Panc1 (cell line): ENCODE measurements at regions of chr2 and their contacts with region 1.

Region 1: GRCh38 chr2:234363011-234363487 is 133.8 kb downstream of the ARL4C start:
- DNase-seq: peak; percentile 28
- ATAC-seq: peak; percentile 96
- H3K4me3 ChIP-seq: peak overlapping the region in 1 of 2 experiments; percentile 3; a peak in 1 of 4 replicates
- H3K27ac ChIP-seq: peak overlapping the region; percentile 100
- H3K4me1 ChIP-seq: peaks cover 57% of the 10 kb centered on the region
- H3K27me3 ChIP-seq: no peaks in the 10 kb centered on the region
- CTCF ChIP-seq: no peak

Region 2: DNA sequence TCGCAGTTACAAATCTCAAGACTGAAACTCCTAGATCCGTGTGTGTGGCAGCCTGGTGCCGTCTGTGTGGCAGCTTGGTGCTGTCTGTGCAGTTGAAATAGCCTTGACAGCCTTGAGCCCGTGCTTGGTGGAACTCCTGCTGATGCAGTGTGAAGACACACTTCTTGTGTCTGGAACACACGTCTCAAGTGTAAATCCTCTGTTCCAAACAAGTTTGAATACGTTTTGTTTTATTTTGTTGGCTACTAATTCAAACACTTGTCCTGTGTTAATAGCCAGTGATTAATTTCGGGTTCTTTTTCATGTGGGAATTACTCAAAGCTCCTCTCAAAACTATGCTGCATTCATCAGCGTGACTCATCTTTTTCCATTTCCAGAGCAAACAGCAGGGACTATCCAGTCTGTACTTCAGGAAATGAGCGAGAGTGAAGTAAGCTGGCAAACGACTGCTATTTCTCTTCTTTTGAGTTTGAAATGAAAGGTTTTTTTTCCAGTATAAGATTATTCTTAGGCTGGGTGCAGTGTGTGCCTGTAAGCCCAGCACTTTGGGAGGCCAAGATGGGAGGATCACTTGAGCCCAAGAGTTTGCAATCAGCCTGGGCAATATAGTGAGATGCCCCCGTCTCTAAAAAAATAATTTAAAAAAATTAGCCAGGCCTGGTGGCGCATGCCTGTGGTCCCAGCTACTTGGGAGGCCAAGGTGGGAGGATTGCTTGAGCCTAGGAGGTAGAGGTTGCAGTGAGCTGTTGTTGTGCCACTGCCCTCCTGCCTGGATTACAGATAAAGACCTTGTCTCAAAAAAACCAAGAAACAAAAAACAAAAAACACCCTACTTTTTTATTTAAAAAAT is 159.7 kb before region 1 on chr2:
- CTCF ChIA-PET with region 1: no interaction called
- POLR2A ChIA-PET with region 1: no interaction called
- in situ Hi-C with region 1: no loop called
- intact Hi-C with region 1: no loop called
- DNase-seq: peak; percentile 94
- ATAC-seq: peak; percentile 98
- H3K4me3 ChIP-seq: peak overlapping the region in 1 of 2 experiments; percentile 23; a peak in 2 of 4 replicates
- H3K27ac ChIP-seq: peak overlapping the region; percentile 90
- H3K4me1 ChIP-seq: peaks cover 18% of the 10 kb centered on the region
- H3K27me3 ChIP-seq: no peaks in the 10 kb centered on the region
- CTCF ChIP-seq: no peak

Region 3: DNA sequence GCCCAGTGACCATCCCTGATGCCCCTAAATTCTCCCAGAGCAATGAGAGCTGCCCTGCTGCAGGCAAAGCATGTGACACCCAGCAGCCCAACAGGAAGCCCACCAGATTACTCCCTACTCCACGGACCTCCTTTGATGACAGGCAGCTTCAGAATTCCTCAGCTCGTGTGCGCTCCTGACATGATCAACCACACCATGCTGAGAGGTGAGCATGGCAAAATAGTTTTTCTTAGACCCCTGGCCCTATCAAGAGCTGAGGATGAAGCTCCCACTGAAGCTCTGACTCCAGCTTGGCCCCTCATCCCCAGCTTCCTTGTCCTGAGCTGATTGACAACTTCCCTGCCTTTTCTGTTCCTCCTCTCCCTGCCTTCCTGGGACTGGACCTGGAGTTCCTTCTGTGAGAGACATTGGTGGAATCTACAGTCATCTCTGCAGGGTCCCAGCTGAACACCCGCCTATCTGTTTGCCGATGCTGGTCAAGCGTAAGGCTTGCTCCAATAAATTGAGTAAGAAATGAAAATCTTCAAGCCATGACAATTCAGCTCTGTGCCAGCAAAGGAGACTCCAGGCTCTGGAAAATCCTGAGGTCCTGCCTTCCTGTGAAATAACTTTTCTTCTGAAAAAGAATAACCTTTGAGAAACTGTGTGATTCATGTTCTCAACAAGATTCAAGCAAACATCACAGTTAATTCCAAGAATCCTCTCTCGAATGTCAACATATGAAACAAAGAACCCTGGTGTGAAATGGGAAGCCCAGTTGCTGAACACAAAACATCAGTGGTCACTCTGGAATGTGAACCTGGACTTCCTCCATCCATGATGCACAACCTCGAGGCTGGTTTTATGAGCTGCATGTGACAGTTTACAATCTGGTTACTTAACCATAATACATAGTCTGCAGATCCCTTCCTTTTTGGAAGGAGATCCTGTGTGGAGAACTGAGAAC is 111.5 kb before region 1 on chr2:
- CTCF ChIA-PET with region 1: no interaction called
- POLR2A ChIA-PET with region 1: no interaction called
- in situ Hi-C with region 1: no loop called
- intact Hi-C with region 1: loop called (anchors 5 kb)
- DNase-seq: no peak
- ATAC-seq: peak; percentile 71
- H3K4me3 ChIP-seq: no peak overlapping the region
- H3K27ac ChIP-seq: peak overlapping the region; percentile 99
- H3K4me1 ChIP-seq: peaks cover 63% of the 10 kb centered on the region
- H3K27me3 ChIP-seq: no peaks in the 10 kb centered on the region
- CTCF ChIP-seq: no peak

Region 4: DNA sequence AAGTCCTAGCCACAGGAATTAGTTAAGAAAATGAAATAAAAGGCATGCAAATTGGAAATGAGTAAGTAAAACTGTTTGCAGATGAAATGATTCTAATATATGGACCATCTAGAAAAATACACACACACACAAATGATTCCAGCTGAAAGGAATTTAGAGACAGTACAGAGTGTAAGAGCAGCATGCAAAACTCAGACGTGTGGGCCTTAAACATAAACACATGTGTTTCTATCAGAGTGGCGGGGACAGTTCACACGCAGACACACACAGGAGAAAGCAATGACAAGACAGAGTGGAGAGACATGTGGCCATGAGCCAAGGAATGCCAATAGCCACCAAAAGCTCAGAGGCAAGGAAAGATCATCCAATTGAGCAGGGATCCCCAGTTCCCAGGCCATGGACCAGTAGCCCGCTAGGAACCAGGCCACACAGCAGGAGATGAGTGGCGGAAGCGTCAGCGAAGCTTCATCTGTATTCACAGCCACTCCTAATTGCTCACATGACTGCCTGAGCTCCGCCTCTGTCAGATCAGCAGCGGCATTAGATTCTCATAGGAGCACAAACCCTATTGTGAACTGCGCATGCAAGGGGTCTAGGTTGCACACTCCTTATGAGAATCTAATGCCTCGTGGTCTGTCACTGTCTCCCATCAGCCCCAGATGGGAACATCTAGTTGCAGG is 21.6 kb before region 1 on chr2:
- CTCF ChIA-PET with region 1: no interaction called
- POLR2A ChIA-PET with region 1: no interaction called
- in situ Hi-C with region 1: no loop called
- intact Hi-C with region 1: no loop called
- DNase-seq: no peak
- ATAC-seq: no peak
- H3K4me3 ChIP-seq: no peak overlapping the region
- H3K27ac ChIP-seq: peak overlapping the region; percentile 7; the same call in 1 of the 2 replicates
- H3K4me1 ChIP-seq: no peaks in the 10 kb centered on the region
- H3K27me3 ChIP-seq: no peaks in the 10 kb centered on the region
- CTCF ChIP-seq: no peak

Region 5: GRCh38 chr2:234533626-234534025 is 170.6 kb after region 1 on chr2:
- CTCF ChIA-PET with region 1: no interaction called
- POLR2A ChIA-PET with region 1: no interaction called
- in situ Hi-C with region 1: no loop called
- intact Hi-C with region 1: no loop called
- DNase-seq: no peak
- ATAC-seq: no peak
- H3K4me3 ChIP-seq: no peak overlapping the region
- H3K27ac ChIP-seq: no peak overlapping the region
- H3K4me1 ChIP-seq: no peaks in the 10 kb centered on the region
- H3K27me3 ChIP-seq: no peaks in the 10 kb centered on the region
- CTCF ChIP-seq: no peak

Region 6: DNA sequence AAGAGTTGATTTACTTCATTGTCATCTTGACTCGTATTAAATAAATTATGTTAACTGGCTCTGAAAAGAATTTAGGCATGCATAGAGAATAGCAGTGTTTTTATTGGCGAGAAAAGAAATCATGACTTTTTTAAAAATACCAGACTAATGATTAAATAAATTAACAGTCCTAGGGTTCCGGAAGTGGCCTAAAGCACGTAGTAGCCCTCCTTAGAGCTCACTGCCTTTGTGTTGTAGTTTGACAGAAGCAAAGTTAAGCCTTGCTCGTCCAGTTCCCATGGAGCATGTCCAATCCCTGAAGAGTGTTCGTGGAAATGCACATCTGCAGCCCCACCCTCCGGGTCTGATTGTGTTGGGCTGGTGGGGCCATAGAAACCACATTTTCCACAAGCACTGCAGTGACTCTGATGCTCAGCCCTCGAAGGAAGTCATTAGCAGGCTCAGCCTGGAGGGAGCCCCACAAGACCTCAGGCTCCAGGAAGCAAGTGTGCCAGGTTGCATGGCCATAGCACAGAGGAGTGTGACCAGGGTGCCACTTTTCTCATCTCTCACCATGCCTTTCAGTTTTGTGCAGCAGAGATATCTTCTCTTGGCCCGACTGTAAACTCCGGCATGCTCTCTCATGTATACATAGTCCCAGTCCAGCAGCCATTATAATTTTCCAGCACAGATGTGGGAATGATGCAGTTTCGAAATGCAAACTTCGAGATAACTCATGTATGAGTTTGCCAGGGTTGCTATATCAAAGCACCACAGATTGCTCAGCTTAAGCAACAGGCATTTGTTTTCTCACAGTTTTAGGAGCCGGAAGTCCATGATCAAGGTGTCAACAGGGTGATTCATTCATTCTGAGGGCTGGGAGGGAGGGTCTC is 400.2 kb after region 1 on chr2:
- CTCF ChIA-PET with region 1: no interaction called
- POLR2A ChIA-PET with region 1: no interaction called
- in situ Hi-C with region 1: no loop called
- intact Hi-C with region 1: no loop called
- DNase-seq: no peak
- ATAC-seq: no peak
- H3K4me3 ChIP-seq: no peak overlapping the region
- H3K27ac ChIP-seq: no peak overlapping the region
- H3K4me1 ChIP-seq: no peaks in the 10 kb centered on the region
- H3K27me3 ChIP-seq: no peaks in the 10 kb centered on the region
- CTCF ChIP-seq: no peak